Activated B cell treated with CpG ODN at 0.5 μM for 24 hours (primary cell): ENCODE measurements at regions of chr15 and their contacts with region 1.

Region 1: DNA sequence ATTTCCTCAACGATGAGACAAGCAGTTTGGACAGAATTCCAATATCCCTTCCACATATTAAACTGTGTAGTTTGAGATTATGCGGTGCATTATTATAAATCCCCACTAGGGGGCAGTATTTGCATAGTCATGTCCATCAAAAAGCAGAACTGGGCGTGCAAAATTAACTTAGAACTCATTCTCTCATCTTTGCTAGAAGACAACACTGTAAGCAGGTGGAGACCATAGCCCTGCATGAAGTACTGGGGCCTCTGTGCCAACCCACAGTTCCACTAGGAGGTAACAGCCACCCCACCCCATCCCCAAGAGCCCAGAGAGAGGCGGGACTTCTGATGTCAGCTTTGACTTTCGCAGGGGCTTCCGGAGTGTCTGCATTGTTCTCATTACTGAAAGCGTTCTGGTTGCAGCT is 106.6 kb upstream of the TMC3 start:
- DNase-seq: peak; percentile 20
- ATAC-seq: peak; percentile 61
- H3K4me3 Mint-ChIP-seq: no peak overlapping the region
- H3K27ac Mint-ChIP-seq: no peak overlapping the region
- H3K4me1 Mint-ChIP-seq: peaks cover 2% of the 10 kb centered on the region
- H3K27me3 Mint-ChIP-seq: peaks cover 2% of the 10 kb centered on the region
- CTCF ChIP-seq: peak; percentile 85

Region 2: GRCh38 chr15:81939604-81940440 is 459.2 kb after region 1 on chr15:
- CTCF ChIA-PET with region 1: interaction called, 6 read pairs
- POLR2A ChIA-PET with region 1: no interaction called
- intact Hi-C with region 1: loop called (anchors 1 kb)
- DNase-seq: no peak
- ATAC-seq: no peak
- H3K4me3 Mint-ChIP-seq: no peak overlapping the region
- H3K27ac Mint-ChIP-seq: no peak overlapping the region
- H3K4me1 Mint-ChIP-seq: no peaks in the 10 kb centered on the region
- H3K27me3 Mint-ChIP-seq: peaks cover 4% of the 10 kb centered on the region
- CTCF ChIP-seq: no peak

Region 3: GRCh38 chr15:82046666-82047452 is 566.2 kb after region 1 on chr15:
- CTCF ChIA-PET with region 1: no interaction called
- POLR2A ChIA-PET with region 1: no interaction called
- intact Hi-C with region 1: loop called (anchors 1 kb)
- DNase-seq: peak; percentile 84
- ATAC-seq: peak; percentile 81
- H3K4me3 Mint-ChIP-seq: peak overlapping the region; percentile 89
- H3K27ac Mint-ChIP-seq: peak overlapping the region; percentile 66
- H3K4me1 Mint-ChIP-seq: peaks cover 16% of the 10 kb centered on the region
- H3K27me3 Mint-ChIP-seq: peaks cover 27% of the 10 kb centered on the region
- CTCF ChIP-seq: no peak

Region 4: DNA sequence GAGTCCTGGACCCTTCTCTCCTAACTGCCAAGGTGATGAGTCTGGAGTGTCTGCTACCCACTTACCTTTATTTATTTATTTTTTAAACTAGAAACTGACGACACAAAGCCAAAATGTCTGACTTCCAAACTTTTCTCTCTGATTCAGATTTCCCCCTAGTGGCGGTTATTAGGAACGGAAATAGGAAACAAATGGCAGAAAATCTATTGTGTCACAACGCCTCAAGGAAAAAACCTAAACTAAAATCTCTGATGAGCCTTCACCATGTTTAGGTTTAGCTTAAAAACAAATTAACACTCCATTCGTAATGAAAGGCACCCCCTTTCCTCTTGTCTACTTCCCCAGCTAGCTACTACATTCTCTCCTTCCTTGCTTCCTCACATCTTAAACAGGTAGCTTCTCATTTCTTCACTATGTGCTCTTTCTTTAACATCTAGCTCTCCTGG is 659.2 kb after region 1 on chr15:
- CTCF ChIA-PET with region 1: interaction called, 7 read pairs
- POLR2A ChIA-PET with region 1: no interaction called
- intact Hi-C with region 1: loop called (anchors 1 kb)
- DNase-seq: no peak
- ATAC-seq: no peak
- H3K4me3 Mint-ChIP-seq: no peak overlapping the region
- H3K27ac Mint-ChIP-seq: no peak overlapping the region
- H3K4me1 Mint-ChIP-seq: peaks cover 3% of the 10 kb centered on the region
- H3K27me3 Mint-ChIP-seq: no peaks in the 10 kb centered on the region
- CTCF ChIP-seq: peak; percentile 64

Region 5: GRCh38 chr15:82197733-82198594 is 717.3 kb after region 1 on chr15:
- CTCF ChIA-PET with region 1: interaction called, 8 read pairs
- POLR2A ChIA-PET with region 1: no interaction called
- intact Hi-C with region 1: loop called (anchors 1 kb)
- DNase-seq: peak; percentile 18
- ATAC-seq: peak; percentile 83
- H3K4me3 Mint-ChIP-seq: no peak overlapping the region
- H3K27ac Mint-ChIP-seq: no peak overlapping the region
- H3K4me1 Mint-ChIP-seq: peaks cover 9% of the 10 kb centered on the region
- H3K27me3 Mint-ChIP-seq: no peaks in the 10 kb centered on the region
- CTCF ChIP-seq: peak; percentile 37